ENCODE measurements at regions of chr1 and their contacts with region 1.

Region 1: DNA sequence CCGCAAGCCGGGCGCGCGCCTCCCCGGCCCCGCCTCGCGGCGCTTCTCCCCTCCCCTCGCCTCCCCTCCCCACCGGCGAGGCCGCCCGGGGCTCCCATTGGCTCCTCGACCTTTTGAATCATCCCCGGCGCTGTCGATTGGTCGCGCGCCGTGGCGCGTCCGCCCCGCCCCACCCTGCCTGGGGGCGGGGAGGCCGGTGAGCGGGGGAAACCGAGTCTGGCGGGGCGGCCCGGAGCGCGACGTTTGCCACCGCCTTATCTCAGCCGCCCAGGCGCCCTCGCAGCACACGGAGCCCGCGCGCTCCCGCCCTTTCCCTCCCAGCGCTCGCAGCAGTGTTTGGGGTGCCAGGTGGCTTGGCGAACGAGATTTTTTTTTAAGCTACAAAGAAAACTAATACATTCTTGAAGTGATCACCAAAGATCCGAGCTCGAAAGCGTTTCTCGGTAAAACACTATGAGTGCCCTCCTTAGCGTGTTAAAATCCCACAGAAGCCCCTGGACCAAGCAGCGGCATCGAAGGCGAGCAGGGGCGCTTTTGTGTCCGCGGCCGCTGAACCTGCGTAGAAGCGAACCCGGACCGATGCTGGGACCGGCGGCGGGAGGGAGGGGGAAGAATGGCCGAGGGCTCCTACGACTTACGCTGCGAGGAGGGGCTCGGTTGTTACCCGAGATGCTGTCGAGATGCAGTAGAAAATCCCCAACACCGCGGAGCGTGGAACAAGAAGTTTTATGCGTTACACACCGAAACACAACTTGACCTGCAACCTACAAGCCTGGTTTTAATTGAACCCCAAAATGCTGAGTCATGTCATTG is 436 bp upstream of the LBR start:
- DNase-seq: peak; percentile 87 to 94 (median 90)
- ATAC-seq: peak; percentile 86 to 89
- H3K4me3 Mint-ChIP-seq: peak overlapping the region; percentile 86 to 94 (median 90)
- H3K27ac Mint-ChIP-seq: peak overlapping the region; percentile 28 to 96 (median 93)
- H3K4me1 Mint-ChIP-seq: peaks cover 28 to 45% (median 39%) of the 10 kb centered on the region in 4 donors
- H3K27me3 Mint-ChIP-seq: no peaks in the 10 kb centered on the region

Region 2: DNA sequence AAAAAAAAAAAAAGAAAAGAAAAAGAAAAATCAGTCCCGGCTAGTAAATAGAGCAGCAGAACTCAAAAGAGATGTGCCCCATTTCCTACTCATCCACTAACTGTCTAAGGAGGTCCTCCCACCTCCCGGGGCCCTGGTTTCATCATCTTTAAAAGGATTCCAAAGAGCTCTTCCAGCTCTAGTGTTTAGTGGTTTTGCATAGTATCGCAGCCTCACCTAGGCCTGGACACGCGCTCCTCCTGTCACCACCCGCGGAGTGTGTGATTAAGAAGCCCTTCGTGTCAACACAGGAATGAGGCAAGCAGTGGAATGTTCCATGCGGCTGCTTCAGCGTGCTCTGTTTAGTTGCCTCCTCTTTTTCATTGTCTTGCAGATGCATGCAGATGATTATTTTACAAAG is 49.4 kb before region 1 on chr1:
- POLR2A ChIA-PET with region 1: no interaction called
- DNase-seq: no peak
- ATAC-seq: no peak
- H3K4me3 Mint-ChIP-seq: no peak overlapping the region
- H3K27ac Mint-ChIP-seq: no peak overlapping the region
- H3K4me1 Mint-ChIP-seq: no peaks in the 10 kb centered on the region
- H3K27me3 Mint-ChIP-seq: no peaks in the 10 kb centered on the region

Region 3: GRCh38 chr1:225415967-225416745 is 12.1 kb before region 1 on chr1:
- POLR2A ChIA-PET with region 1: interaction called, 13 read pairs
- DNase-seq: no peak
- ATAC-seq: no peak
- H3K4me3 Mint-ChIP-seq: no peak overlapping the region
- H3K27ac Mint-ChIP-seq: peak overlapping the region in 2 of 10 donors; percentile 43 to 57
- H3K4me1 Mint-ChIP-seq: peaks cover 15 to 30% (median 26%) of the 10 kb centered on the region in 4 donors
- H3K27me3 Mint-ChIP-seq: no peaks in the 10 kb centered on the region

Region 4: GRCh38 chr1:225441314-225442122 is 13.2 kb after region 1 on chr1:
- POLR2A ChIA-PET with region 1: interaction called, 190 read pairs
- DNase-seq: peak in 1 of 10 donors; percentile 16
- ATAC-seq: no peak
- H3K4me3 Mint-ChIP-seq: peak overlapping the region; percentile 48 to 70 (median 54)
- H3K27ac Mint-ChIP-seq: peak overlapping the region; percentile 66 to 92 (median 84)
- H3K4me1 Mint-ChIP-seq: peaks cover 27 to 66% (median 56%) of the 10 kb centered on the region in 4 donors
- H3K27me3 Mint-ChIP-seq: no peaks in the 10 kb centered on the region

Measured in naive thymus-derived CD8-positive, alpha-beta T cell (primary cell).